Upper lobe of right lung (tissue), 1 donor: ENCODE measurements at regions of chr3 and their contacts with region 1.

Region 1: GRCh38 chr3:43162230-43163084 is 56.6 kb upstream of the POMGNT2 start:
- DNase-seq: no peak
- ATAC-seq: peak; percentile 25
- H3K4me3 ChIP-seq: no peak overlapping the region
- H3K27ac ChIP-seq: peak overlapping the region; percentile 60
- H3K4me1 ChIP-seq: peaks cover 8% of the 10 kb centered on the region
- H3K27me3 ChIP-seq: no peaks in the 10 kb centered on the region
- CTCF ChIP-seq: peak; percentile 54

Region 2: GRCh38 chr3:43503067-43503728 is 340.7 kb after region 1 on chr3:
- intact Hi-C with region 1: loop called (anchors 10 kb)
- DNase-seq: no peak
- ATAC-seq: no peak
- H3K4me3 ChIP-seq: no peak overlapping the region
- H3K27ac ChIP-seq: no peak overlapping the region
- H3K4me1 ChIP-seq: peaks cover 22% of the 10 kb centered on the region
- H3K27me3 ChIP-seq: no peaks in the 10 kb centered on the region
- CTCF ChIP-seq: peak; percentile 56